CD4-positive, alpha-beta memory T cell (primary cell): ENCODE measurements at regions of chr13 and their contacts with region 1.

Region 1: GRCh38 chr13:46553886-46554858 is 1.2 kb downstream of the LRCH1 start:
- DNase-seq: peak; percentile 70 to 85 (median 75)
- H3K4me3 ChIP-seq: peak overlapping the region; percentile 67 to 87
- H3K4me3 Mint-ChIP-seq: peak overlapping the region; percentile 94 to 98 (median 96)
- H3K27ac ChIP-seq: peak overlapping the region; percentile 79
- H3K27ac Mint-ChIP-seq: peak overlapping the region; percentile 92 to 97 (median 94)
- H3K4me1 ChIP-seq: peaks cover 38% of the 10 kb centered on the region
- H3K4me1 Mint-ChIP-seq: peaks cover 38 to 63% (median 45%) of the 10 kb centered on the region in 4 donors
- H3K27me3 ChIP-seq: no peaks in the 10 kb centered on the region
- H3K27me3 Mint-ChIP-seq: peaks cover under 1 to 1% of the 10 kb centered on the region in 2 donors

Region 2: DNA sequence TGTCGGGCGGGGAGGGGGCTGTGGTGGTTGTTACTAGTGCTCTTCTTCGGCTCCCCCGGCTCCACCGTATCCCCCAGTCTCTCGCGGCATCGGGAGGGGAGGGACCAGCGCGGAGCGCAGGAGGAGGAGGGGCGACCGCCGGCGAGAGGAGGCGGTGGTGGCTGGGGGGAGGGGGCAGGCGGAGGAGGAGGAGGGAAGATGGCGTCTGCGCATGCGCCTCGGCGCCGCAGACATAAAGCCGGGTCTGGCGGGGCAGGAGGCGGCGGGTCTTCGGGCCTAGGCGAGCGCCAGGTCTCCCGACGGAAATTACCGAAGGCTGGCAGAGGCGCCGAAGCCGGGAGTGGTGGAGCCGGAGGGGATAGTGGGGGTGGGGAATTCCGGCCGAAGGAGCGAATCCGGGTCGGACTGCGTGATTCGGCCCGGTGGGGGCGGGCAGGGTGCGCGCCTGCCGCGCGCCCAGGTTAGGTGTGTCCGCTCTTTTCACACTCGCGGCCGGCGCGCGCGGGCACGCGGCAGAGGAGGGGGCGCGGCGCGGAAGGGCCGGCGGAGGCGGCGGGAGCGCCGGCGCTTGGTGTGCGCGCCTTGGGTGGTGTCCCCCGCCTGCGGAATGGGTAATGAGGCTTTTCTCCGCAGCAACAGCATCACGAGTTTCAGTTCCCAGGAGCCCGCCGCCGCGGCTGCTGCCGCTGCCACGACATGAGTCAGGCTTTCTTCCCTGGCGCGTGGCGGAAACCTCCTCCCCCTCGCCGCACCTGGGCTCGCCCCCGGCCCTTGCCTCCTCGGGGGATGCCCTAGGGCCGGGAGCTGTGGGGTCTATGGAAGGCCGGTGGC is 1976.7 kb before region 1 on chr13:
- CTCF ChIA-PET with region 1: no interaction called
- POLR2A ChIA-PET with region 1: no interaction called
- intact Hi-C with region 1: loop called (anchors 5 kb)
- DNase-seq: peak; percentile 93 to 96 (median 94)
- H3K4me3 ChIP-seq: peak overlapping the region; percentile 47 to 86
- H3K4me3 Mint-ChIP-seq: peak overlapping the region; percentile 88 to 97 (median 94)
- H3K27ac ChIP-seq: peak overlapping the region; percentile 84
- H3K27ac Mint-ChIP-seq: peak overlapping the region; percentile 91 to 97 (median 95)
- H3K4me1 ChIP-seq: peaks cover 39% of the 10 kb centered on the region
- H3K4me1 Mint-ChIP-seq: peaks cover 28 to 46% (median 38%) of the 10 kb centered on the region in 4 donors
- H3K27me3 ChIP-seq: no peaks in the 10 kb centered on the region
- H3K27me3 Mint-ChIP-seq: no peaks in the 10 kb centered on the region

Region 3: DNA sequence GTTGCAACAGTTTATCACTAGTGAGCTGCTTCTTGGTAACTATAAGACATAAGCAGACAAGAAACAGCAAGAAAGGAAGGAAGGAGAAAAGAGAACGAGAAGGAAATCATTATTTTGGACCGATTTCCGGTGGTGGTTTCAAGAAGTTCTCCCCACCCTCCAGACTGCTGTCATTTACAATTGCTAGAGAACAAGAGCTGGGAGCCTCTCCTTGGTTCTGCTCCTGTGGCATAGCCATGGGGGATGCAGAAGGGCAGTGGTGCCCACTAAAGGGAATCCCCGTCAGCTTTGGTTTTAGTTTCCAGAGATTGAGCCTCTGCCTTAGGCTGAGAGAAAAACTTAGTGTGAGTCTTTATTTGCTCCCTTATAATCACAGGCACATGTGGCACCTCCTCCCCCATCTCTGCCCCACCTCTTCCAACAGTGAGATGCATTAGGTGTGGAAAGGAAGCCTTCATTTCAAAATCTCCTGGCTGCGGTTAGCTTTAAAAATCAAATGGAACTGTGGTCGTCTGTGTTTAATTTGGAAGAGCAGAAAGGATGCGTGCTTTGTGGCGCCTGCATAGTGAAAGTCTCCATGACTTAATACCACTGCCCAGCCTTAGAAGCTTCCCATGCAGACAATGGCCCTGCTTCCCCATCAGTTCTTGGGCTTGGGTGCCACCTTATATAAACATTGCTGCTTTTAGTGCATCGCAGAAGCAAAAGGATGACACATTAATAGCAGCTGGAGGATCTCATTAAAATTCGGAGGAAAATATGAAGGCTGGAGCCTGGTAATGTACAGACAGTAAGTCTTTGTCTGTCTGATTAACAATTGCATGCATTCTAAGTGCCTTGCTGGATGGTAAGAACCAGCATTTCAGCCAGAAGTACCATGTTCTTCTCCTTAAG is 23.8 kb after region 1 on chr13:
- CTCF ChIA-PET with region 1: interaction called, 11 read pairs
- POLR2A ChIA-PET with region 1: interaction called, 5 read pairs
- intact Hi-C with region 1: no loop called
- DNase-seq: no peak
- H3K4me3 ChIP-seq: no peak overlapping the region
- H3K4me3 Mint-ChIP-seq: peak overlapping the region in 7 of 8 donors; percentile 14 to 76 (median 44)
- H3K27ac ChIP-seq: no peak overlapping the region
- H3K27ac Mint-ChIP-seq: peak overlapping the region in 3 of 7 donors; percentile 2 to 7 (median 5)
- H3K4me1 ChIP-seq: peaks cover 33% of the 10 kb centered on the region
- H3K4me1 Mint-ChIP-seq: peaks cover 39 to 72% (median 55%) of the 10 kb centered on the region in 4 donors
- H3K27me3 ChIP-seq: no peaks in the 10 kb centered on the region
- H3K27me3 Mint-ChIP-seq: no peaks in the 10 kb centered on the region

Region 4: GRCh38 chr13:46662690-46663089 is 108.5 kb after region 1 on chr13:
- CTCF ChIA-PET with region 1: interaction called, 11 read pairs
- POLR2A ChIA-PET with region 1: no interaction called
- intact Hi-C with region 1: loop called (anchors 5 kb)
- DNase-seq: no peak
- H3K4me3 ChIP-seq: no peak overlapping the region
- H3K4me3 Mint-ChIP-seq: no peak overlapping the region
- H3K27ac ChIP-seq: no peak overlapping the region
- H3K27ac Mint-ChIP-seq: peak overlapping the region in 2 of 7 donors; percentile 36 to 53
- H3K4me1 ChIP-seq: peaks cover 38% of the 10 kb centered on the region
- H3K4me1 Mint-ChIP-seq: peaks cover 29 to 57% (median 38%) of the 10 kb centered on the region in 4 donors
- H3K27me3 ChIP-seq: no peaks in the 10 kb centered on the region
- H3K27me3 Mint-ChIP-seq: no peaks in the 10 kb centered on the region

Region 5: DNA sequence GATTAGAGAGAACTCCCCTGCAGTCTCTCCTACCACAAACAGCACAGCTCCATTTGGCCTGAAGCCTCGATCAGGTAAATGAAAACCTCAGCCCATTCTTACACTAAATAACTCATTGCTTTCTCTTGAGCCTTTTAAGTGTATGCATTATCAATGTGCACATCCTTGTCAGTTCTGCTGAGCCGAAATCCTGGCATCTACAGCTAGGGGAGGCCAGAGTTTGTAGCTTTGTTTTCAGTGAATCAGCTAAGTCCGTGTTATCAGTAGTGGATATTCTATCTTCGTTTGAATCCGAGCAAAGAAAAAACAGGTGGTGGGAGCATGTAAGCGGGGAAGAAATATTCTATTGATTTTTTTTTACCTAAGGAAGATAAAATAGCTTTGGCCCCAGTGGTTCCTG is 158.4 kb after region 1 on chr13:
- CTCF ChIA-PET with region 1: interaction called, 98 read pairs
- POLR2A ChIA-PET with region 1: interaction called, 3 read pairs
- intact Hi-C with region 1: no loop called
- DNase-seq: no peak
- H3K4me3 ChIP-seq: no peak overlapping the region
- H3K4me3 Mint-ChIP-seq: no peak overlapping the region
- H3K27ac ChIP-seq: no peak overlapping the region
- H3K27ac Mint-ChIP-seq: no peak overlapping the region
- H3K4me1 ChIP-seq: no peaks in the 10 kb centered on the region
- H3K4me1 Mint-ChIP-seq: no peaks in the 10 kb centered on the region
- H3K27me3 ChIP-seq: no peaks in the 10 kb centered on the region
- H3K27me3 Mint-ChIP-seq: no peaks in the 10 kb centered on the region

Region 6: DNA sequence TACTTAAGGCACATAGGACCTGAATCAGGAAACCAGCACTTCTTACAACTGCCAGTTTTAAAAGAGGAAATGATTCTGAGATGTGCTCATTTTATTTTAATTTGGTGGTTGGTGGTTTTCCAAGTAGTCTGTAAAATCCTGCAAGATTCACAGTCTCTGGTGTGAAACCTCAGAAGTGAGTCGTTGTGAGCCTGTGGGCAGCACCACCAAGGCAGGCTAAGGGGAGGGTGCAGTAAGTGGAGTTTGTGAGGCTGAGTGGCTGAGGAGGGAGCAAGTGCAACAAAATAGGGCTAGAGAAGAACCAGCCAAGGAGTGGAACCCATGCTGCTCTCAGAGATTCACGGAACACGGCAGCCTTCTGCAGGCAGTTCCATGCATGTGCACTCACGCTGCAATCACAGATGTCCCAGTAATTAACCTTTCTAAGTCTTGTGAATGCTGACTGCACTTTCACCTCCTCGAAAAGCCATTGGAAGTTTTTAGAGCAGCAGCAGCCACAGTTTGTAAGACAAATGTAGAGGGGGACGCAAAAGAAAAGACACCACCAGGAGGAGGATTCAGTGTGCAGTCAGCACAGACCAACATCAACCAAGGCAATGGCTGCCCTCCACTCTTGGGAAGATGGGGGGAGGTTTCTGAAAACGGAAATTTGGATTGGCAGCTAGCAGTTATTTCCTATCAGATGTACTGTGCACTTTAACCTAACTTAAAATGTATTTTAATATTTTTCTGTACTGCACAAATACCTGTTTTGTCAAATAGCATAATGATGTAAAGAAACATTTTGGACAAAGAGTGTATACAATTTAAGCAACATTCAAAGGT is 197.9 kb after region 1 on chr13:
- CTCF ChIA-PET with region 1: interaction called, 13 read pairs
- POLR2A ChIA-PET with region 1: no interaction called
- intact Hi-C with region 1: loop called (anchors 1 kb)
- DNase-seq: peak; percentile 49 to 79 (median 55)
- H3K4me3 ChIP-seq: no peak overlapping the region
- H3K4me3 Mint-ChIP-seq: peak overlapping the region in 7 of 8 donors; percentile 4 to 64 (median 24)
- H3K27ac ChIP-seq: no peak overlapping the region
- H3K27ac Mint-ChIP-seq: peak overlapping the region; percentile 26 to 88 (median 79)
- H3K4me1 ChIP-seq: peaks cover 15% of the 10 kb centered on the region
- H3K4me1 Mint-ChIP-seq: peaks cover 14 to 30% (median 21%) of the 10 kb centered on the region in 4 donors
- H3K27me3 ChIP-seq: no peaks in the 10 kb centered on the region
- H3K27me3 Mint-ChIP-seq: no peaks in the 10 kb centered on the region